Activated B cell treated with CpG ODN at 0.5 μM for 24 hours (primary cell): ENCODE measurements at regions of chr12 and their contacts with region 1.

Region 1: GRCh38 chr12:132771126-132771838 is 9.7 kb upstream of the ANKLE2 start:
- DNase-seq: peak; percentile 38
- ATAC-seq: peak; percentile 49
- H3K4me3 Mint-ChIP-seq: peak overlapping the region; percentile 62
- H3K27ac Mint-ChIP-seq: peak overlapping the region; percentile 94
- H3K4me1 Mint-ChIP-seq: peaks cover 68% of the 10 kb centered on the region
- H3K27me3 Mint-ChIP-seq: no peaks in the 10 kb centered on the region
- CTCF ChIP-seq: no peak

Region 2: DNA sequence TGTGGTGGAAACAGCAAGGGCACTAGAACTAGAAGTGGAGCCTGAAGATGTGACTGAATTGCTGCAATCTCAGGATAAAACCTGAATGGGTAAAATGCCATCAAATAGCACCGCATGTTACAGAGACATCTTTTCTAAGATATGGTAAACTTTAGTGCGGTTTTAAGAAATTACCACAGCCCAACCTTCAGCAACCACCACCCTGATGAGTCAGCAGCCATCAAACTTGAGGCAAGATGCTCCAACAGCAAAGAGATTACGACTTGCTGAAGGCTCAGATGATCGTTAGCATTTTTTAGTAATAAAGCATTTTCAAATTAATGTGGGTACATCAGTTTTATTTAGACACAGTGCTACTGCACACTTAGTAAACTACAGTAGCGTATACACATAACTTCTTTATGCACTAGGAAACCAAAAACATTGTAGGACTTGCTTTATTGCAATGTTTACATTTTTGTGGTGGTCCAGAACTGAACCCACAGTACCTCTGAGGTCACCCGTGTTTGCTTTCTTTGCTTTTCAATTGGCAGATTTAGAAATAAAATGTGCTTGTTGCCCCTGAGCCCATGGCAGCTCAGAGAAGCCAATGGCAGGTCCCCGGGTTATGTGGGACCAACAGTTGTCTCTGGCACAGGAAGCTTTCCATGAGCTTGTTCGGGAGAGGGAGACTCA is 41.5 kb after region 1 on chr12:
- CTCF ChIA-PET with region 1: no interaction called
- POLR2A ChIA-PET with region 1: no interaction called
- intact Hi-C with region 1: loop called (anchors 1 kb)
- DNase-seq: no peak
- ATAC-seq: no peak
- H3K4me3 Mint-ChIP-seq: no peak overlapping the region
- H3K27ac Mint-ChIP-seq: peak overlapping the region; percentile 56
- H3K4me1 Mint-ChIP-seq: peaks cover 6% of the 10 kb centered on the region
- H3K27me3 Mint-ChIP-seq: no peaks in the 10 kb centered on the region
- CTCF ChIP-seq: no peak

Region 3: DNA sequence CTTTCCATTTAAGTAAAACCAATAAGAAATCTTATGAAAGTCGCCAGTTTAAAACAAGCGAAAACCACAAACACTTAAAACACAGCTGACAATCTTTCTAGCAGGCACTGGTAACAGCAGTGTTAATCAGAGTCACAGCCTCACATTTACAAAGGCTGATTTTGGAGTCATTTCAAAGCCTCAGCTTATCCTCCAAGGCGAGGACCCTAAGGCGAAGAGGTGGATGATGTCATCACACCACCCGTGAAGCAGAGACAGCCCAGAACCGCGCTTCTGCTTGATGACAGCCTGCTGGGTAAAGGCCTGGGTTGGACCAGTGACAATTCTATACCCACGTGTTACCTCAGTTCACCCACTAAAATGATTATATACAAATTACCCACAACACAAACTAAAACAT is 47.3 kb after region 1 on chr12:
- CTCF ChIA-PET with region 1: interaction called, 5 read pairs
- POLR2A ChIA-PET with region 1: interaction called, 17 read pairs
- intact Hi-C with region 1: loop called (anchors 2 kb)
- DNase-seq: no peak
- ATAC-seq: no peak
- H3K4me3 Mint-ChIP-seq: no peak overlapping the region
- H3K27ac Mint-ChIP-seq: peak overlapping the region; percentile 92
- H3K4me1 Mint-ChIP-seq: peaks cover 38% of the 10 kb centered on the region
- H3K27me3 Mint-ChIP-seq: no peaks in the 10 kb centered on the region
- CTCF ChIP-seq: no peak